ENCODE measurements at regions of chr12 and their contacts with region 1.

Region 1: DNA sequence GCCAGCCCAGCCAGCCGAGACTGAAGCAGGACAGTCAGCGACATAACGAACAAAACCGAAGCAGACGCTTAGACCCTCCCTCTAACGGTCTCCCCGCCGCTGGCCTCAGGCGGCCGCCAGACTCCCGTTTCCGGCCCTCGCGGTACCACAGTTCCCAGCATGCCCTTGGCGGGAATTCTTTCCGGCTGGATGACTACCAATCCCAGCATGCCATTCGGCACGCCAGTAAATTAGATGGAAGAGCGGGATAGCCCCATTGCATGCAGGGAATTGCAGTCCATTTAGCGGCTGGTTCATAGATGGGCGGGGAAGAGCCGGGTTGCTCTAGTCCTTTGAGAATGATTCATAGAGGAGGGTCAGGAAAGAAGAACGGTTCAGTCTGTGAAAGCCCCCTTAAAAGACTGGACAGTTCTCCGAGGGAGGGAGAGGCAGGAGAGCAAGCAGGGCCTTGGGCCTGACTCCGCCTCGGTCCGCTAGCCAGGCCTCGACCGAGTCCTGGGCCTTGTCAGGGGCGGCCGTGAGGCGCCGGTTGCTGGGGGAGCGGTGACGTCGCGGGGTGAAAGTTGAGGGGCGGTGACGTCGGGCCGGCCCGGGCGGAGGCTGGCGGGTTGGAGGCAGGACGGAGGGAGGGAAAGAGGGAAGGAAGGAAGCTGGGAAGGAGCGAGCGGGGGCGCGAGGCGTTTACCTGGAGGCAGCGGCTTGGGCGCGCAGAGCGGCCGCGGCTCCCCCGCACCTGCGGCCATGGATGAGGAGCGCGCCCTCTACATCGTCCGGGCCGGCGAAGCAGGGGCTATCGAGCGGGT is at the start of gene RIC8B:
- DNase-seq: peak; percentile 89
- ATAC-seq: peak; percentile 92
- H3K4me3 Mint-ChIP-seq: peak within 1 kb of the TSS; percentile 95
- H3K27ac Mint-ChIP-seq: peak within 1 kb of the TSS; percentile 98
- H3K4me1 Mint-ChIP-seq: peaks cover 32% of the 10 kb centered on the region
- H3K27me3 Mint-ChIP-seq: no peaks in the 10 kb centered on the region
- total RNA-seq, gene RIC8B: 10.7 to 11.3 TPM

Region 2: GRCh38 chr12:105235732-105236476 is 1538.3 kb before region 1 on chr12 and contains the start of gene APPL2:
- CTCF ChIA-PET with region 1: no interaction called
- POLR2A ChIA-PET with region 1: no interaction called
- intact Hi-C with region 1: loop called in 1 of 2 experiments (anchors 10 kb)
- DNase-seq: peak; percentile 87
- ATAC-seq: peak; percentile 84
- H3K4me3 Mint-ChIP-seq: peak within 1 kb of the TSS; percentile 85
- H3K27ac Mint-ChIP-seq: peak within 1 kb of the TSS; percentile 86
- H3K4me1 Mint-ChIP-seq: peaks cover 41% of the 10 kb centered on the region
- H3K27me3 Mint-ChIP-seq: no peaks in the 10 kb centered on the region
- total RNA-seq, gene APPL2: 13.9 to 17.2 TPM

Region 3: DNA sequence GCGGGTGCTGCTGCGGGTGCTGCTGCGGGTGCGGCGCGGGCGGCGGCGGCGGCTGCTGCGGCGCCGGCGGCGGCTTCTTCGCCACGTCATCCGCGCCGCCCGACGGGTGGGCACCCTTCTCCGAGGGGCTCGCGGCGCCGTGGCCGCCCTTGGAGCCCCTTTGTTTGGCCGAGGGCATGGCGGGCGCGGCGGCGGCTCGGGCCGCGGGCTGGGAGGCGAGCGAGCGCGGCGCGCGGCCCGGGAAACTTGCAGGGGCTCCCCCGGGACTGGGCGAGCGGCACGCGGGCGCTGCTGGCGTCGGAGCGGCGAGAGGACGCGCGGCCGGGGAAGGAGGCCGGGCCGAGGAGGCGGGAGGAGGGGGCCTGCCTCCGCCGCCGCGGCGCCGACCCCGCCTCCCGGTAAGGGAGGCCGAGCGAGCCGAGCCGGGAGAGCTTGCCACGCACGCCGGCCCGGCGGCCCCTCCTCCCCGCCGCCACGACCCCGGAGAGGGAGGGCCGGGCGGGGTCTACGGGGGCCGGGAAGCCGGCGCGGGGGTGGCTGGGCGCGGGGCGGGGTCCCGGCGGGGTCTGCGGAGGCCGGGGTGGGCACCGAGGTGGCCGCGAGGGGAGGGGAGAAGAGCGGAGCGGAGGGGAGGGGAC is 526.4 kb before region 1 on chr12 and contains the start of gene CKAP4:
- CTCF ChIA-PET with region 1: no interaction called
- POLR2A ChIA-PET with region 1: no interaction called
- intact Hi-C with region 1: loop called in 1 of 2 experiments (anchors 10 kb)
- DNase-seq: peak; percentile 72
- ATAC-seq: peak; percentile 49
- H3K4me3 Mint-ChIP-seq: peak within 1 kb of the TSS; percentile 68
- H3K27ac Mint-ChIP-seq: peak within 1 kb of the TSS; percentile 80
- H3K4me1 Mint-ChIP-seq: peaks cover 30% of the 10 kb centered on the region
- H3K27me3 Mint-ChIP-seq: no peaks in the 10 kb centered on the region
- total RNA-seq, gene CKAP4: 13.7 to 15.6 TPM

Region 4: GRCh38 chr12:106302401-106303201 is 471.6 kb before region 1 on chr12 and contains the start of gene TCP11L2:
- CTCF ChIA-PET with region 1: no interaction called
- POLR2A ChIA-PET with region 1: no interaction called
- intact Hi-C with region 1: loop called in 1 of 2 experiments (anchors 5 kb)
- DNase-seq: peak; percentile 94
- ATAC-seq: peak; percentile 67
- H3K4me3 Mint-ChIP-seq: peak within 1 kb of the TSS; percentile 78
- H3K27ac Mint-ChIP-seq: peak within 1 kb of the TSS; percentile 99
- H3K4me1 Mint-ChIP-seq: peaks cover 59% of the 10 kb centered on the region
- H3K27me3 Mint-ChIP-seq: no peaks in the 10 kb centered on the region
- total RNA-seq, gene TCP11L2: 8.6 to 11.8 TPM

Region 5: DNA sequence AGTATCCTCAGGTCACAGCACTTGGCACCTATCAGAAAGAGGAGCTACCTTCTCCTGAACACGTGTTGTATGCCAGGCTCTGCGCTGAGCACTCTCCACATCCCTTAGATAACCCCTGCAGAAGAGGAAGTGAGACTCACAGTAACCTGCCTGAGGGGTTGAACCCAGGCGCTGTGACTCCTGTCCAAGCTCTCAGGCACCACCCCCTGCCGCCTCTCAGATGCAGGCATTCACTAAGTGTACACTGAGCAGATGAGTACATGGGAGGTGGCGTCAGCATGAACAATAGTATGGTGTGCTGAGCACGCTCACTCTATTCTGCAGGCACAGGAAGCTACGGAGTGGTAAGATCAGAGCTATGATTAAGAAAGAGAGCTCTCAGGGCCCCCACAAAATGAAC is 20.7 kb before region 1 on chr12:
- CTCF ChIA-PET with region 1: interaction called, 9 read pairs
- POLR2A ChIA-PET with region 1: no interaction called
- intact Hi-C with region 1: loop called in 1 of 2 experiments (anchors 2 kb)
- DNase-seq: peak; percentile 81
- ATAC-seq: peak; percentile 99
- H3K4me3 Mint-ChIP-seq: peak overlapping the region; percentile 29
- H3K27ac Mint-ChIP-seq: peak overlapping the region; percentile 90
- H3K4me1 Mint-ChIP-seq: peaks cover 23% of the 10 kb centered on the region
- H3K27me3 Mint-ChIP-seq: no peaks in the 10 kb centered on the region

Region 6: DNA sequence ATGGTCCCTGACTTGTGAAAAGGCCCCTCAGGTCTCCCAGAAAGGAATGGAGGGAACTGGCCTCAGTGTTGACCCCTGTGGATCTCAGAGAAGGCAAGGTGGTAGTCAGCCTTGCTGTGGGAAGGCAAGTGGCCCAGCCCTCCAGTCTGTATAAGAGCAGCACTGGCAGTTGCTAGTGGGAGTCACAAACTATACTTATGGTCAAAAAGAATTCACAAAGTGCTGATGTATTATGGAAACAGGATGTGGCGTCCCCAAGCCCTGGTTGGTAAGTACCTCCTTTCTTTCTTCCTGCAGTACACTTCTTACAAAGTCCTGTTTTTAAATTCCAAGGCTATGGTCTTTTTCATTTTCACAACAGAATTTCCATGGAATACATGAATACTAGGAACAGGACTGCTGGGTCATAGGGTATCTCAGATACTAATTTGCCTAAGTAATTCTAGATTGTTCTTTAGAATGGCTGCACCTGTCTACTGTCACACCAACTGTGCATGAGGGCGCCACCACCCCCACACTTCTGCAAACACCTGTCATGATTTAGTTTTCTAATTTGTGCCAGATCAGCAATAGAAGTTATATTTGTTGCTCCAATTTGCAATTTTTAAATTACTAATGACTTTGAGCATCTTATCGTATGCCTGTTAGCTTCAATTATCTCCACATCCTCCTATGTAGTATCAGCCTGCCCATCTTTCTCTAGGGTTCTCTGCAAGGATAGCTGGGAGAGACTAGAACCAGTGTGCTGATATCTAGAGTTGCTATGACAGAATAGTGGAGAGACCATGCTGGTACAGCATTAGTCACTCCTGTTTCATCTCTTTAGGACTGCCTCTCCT is 140.8 kb after region 1 on chr12:
- CTCF ChIA-PET with region 1: interaction called, 4 read pairs
- POLR2A ChIA-PET with region 1: no interaction called
- intact Hi-C with region 1: loop called in 1 of 2 experiments (anchors 1 kb)
- DNase-seq: peak; percentile 52
- ATAC-seq: peak; percentile 84
- H3K4me3 Mint-ChIP-seq: no peak overlapping the region
- H3K27ac Mint-ChIP-seq: peak overlapping the region; percentile 45
- H3K4me1 Mint-ChIP-seq: peaks cover 29% of the 10 kb centered on the region
- H3K27me3 Mint-ChIP-seq: no peaks in the 10 kb centered on the region